T-cell (primary cell): ENCODE measurements at regions of chr3 and their contacts with region 1.

Region 1: DNA sequence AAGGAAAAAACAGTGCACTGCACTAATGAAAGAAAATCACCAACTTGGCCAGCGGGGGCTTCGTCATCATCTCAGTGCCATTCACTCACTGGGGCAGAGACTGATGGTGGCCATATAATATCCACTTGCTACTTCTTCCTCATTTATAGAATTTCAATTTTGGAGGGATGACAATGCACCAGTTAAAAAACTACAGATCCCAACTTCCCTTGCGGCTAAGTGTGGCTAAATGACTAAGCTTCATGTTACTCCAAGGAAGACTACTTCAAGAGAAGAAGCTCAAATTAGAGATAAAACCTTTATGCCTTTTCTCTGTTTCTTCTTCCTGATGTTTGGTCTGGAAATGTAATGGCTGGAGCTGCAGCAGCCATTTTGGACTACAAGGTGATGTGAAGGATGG is 38.8 kb downstream of the NGLY1 start:
- DNase-seq: no peak
- ATAC-seq: no peak
- H3K4me3 ChIP-seq: no peak overlapping the region
- H3K4me3 Mint-ChIP-seq: no peak overlapping the region
- H3K27ac ChIP-seq: no peak overlapping the region
- H3K27ac Mint-ChIP-seq: no peak overlapping the region
- H3K4me1 ChIP-seq: no peaks in the 10 kb centered on the region
- H3K4me1 Mint-ChIP-seq: peaks cover 10 to 32% (median 12%) of the 10 kb centered on the region in 3 donors
- H3K27me3 ChIP-seq: no peaks in the 10 kb centered on the region
- H3K27me3 Mint-ChIP-seq: no peaks in the 10 kb centered on the region

Region 2: DNA sequence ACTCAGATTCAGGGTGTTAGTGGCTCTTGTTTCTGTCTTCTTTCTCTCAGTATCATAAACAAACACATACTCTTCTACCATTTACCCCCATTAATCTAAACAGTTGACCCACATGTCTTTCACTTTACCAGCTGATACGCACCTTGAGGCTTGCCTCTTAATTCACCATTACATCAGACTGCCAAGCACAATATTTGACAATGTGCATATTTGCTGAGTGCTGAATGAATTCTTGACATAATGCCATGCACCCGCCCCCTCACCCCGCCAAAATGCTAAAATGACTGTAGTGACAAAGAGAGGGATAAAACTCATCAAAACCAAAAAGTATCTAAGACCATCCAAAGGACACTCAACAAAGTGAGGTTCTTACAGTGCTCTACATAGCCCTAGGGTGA is 18.7 kb before region 1 on chr3:
- CTCF ChIA-PET with region 1: no interaction called
- POLR2A ChIA-PET with region 1: interaction called in 1 of 2 experiments, 12 read pairs
- DNase-seq: no peak
- ATAC-seq: no peak
- H3K4me3 ChIP-seq: no peak overlapping the region
- H3K4me3 Mint-ChIP-seq: no peak overlapping the region
- H3K27ac ChIP-seq: no peak overlapping the region
- H3K27ac Mint-ChIP-seq: peak overlapping the region in 1 of 2 donors; percentile 25
- H3K4me1 ChIP-seq: no peaks in the 10 kb centered on the region
- H3K4me1 Mint-ChIP-seq: no peaks in the 10 kb centered on the region
- H3K27me3 ChIP-seq: no peaks in the 10 kb centered on the region
- H3K27me3 Mint-ChIP-seq: no peaks in the 10 kb centered on the region